ENCODE measurements at regions of chr11 and their contacts with region 1.

Region 1: GRCh38 chr11:47186076-47186936 is at the start of gene PACSIN3:
- DNase-seq: peak in 4 of 10 donors; percentile 10 to 80 (median 62)

Region 2: GRCh38 chr11:47083913-47084312 is 102.4 kb before region 1 on chr11:
- intact Hi-C with region 1: no loop called
- DNase-seq: no peak

Region 3: GRCh38 chr11:47213985-47214564 is 27.8 kb after region 1 on chr11:
- intact Hi-C with region 1: loop called (anchors 2 kb)
- DNase-seq: peak; percentile 92 to 99 (median 96)

Region 4: GRCh38 chr11:47241841-47242301 is 55.6 kb after region 1 on chr11:
- intact Hi-C with region 1: no loop called
- DNase-seq: peak in 2 of 10 donors; percentile 4 to 7

Region 5: DNA sequence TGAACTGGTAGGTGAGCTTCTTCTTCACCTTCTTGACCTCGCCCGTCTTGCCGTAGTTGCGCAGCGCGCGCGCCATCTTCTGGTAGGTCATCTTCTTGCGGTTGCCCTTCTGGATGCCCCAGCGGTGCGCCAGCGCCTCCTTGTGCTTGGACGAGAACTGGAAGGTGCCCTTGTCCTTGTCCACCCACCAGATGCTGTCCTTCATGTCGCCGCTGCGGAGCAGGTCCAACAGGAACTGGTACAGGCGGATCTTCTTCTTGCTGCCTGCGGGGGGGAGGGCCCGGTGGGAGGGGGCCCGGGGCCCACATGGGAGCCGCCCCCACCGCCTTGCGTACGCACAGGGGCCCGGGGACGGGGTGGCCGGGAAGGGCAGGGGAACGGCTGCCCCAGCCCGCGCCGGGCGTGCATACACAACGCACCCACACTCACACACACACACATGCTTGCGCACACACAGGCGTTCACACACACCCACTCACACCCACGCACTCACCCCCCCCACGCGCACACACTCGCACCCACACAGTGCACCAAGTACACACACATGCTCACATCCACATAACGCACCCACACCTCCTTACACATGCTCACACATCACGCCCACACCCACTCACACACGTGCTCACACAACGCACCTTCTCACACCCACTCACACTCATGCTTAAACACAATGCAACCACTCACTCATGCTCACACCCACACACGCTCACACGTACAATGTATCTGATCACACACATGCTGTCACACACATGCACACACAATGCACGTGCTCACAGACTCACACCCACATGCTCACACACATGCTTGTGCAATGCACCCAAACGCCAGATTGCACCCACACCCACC is 169.2 kb after region 1 on chr11:
- intact Hi-C with region 1: loop called (anchors 2 kb)
- DNase-seq: peak; percentile 82 to 99 (median 93)